WTC11 (cell line): ENCODE measurements at regions of chr2 and their contacts with region 1.

Region 1: DNA sequence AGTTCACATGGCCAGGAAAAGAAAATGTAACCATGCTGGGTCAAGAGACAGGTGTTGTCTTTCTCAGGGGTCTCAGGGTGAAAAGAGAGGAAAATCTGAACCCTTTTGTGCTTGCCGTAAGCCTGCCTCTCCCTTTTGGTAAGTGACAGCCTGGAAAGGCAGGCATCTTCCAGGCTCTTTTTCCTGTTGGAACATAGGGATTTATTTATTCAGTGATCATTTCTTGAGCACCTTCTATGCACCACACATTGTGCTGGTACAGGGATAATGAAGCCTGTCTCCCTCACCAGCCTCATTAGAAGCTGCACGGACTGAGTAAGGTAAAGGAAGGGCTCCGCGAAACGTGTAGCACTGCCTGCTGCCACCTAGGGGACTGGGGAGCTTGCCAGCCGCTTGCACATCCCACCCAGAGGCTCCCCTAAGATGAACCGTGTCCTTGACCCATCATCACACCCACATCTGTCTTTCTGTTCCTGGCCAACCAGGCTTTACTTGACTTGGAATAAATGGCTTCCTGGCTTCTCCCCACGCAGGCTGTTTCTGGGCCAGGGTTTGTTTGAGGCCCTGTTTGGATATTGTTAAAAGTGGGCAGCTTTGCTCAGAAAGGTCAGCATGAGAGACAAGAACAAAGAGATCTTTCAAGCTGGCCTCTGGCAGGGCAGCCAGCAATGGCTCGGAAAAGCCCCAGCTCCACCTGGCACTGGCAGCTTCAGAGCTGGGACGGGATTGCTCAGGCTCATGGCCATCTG is 73.3 kb upstream of the MCFD2 start:
- DNase-seq: peak; percentile 49
- ATAC-seq: peak; percentile 38
- H3K4me3 Mint-ChIP-seq: no peak overlapping the region
- H3K27ac Mint-ChIP-seq: no peak overlapping the region
- H3K4me1 Mint-ChIP-seq: peaks cover 30% of the 10 kb centered on the region
- H3K27me3 Mint-ChIP-seq: no peaks in the 10 kb centered on the region
- CTCF ChIP-seq: no peak

Region 2: DNA sequence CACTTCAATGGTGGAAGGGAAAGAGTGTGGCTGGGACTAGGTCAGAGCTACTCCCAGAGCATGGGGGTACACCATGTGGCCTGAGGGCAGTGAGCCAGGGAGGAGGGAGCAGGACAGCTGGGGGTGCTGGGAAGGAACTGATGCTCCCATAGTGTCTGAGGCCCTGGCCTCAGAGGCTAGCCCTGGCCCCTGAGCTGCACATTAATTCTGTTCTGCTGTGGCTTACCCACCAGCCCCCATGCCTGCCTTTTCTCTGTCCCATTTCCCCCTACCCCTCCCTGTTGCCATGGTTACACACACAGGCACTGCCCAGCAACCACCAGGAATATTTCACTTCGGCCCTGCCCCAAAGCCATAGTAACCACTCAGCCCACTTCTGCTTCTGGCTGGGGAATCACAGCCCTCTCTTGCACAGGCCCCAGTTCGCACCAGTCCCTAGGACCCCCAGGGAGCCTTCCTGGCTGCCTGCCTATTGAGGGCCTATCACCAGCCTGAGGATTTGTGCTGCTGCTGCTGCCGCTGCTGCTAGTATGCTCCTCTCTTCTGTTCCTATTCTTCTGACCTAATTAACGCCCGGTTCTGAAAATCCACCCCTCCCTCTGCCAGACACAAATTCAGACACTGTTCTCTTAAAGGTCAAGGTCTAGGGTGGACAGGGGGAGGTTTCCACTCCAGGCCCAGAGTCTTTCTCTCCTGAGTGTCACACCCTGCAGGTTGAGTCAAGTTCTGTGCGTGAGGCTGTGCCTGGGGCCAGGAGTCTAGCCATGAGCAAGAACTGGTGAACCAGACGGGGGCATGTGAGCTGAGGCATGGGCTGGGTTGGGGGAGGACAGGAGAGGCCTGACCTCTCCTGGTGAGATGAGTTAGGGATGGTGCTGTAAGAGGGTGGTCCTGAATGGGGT is 13.8 kb after region 1 on chr2:
- CTCF ChIA-PET with region 1: interaction called, 16 read pairs
- POLR2A ChIA-PET with region 1: no interaction called
- DNase-seq: no peak
- ATAC-seq: peak; percentile 20
- H3K4me3 Mint-ChIP-seq: no peak overlapping the region
- H3K27ac Mint-ChIP-seq: peak overlapping the region; percentile 32; the same call in 1 of the 2 replicates
- H3K4me1 Mint-ChIP-seq: peaks cover 16% of the 10 kb centered on the region
- H3K27me3 Mint-ChIP-seq: no peaks in the 10 kb centered on the region
- CTCF ChIP-seq: no peak

Region 3: DNA sequence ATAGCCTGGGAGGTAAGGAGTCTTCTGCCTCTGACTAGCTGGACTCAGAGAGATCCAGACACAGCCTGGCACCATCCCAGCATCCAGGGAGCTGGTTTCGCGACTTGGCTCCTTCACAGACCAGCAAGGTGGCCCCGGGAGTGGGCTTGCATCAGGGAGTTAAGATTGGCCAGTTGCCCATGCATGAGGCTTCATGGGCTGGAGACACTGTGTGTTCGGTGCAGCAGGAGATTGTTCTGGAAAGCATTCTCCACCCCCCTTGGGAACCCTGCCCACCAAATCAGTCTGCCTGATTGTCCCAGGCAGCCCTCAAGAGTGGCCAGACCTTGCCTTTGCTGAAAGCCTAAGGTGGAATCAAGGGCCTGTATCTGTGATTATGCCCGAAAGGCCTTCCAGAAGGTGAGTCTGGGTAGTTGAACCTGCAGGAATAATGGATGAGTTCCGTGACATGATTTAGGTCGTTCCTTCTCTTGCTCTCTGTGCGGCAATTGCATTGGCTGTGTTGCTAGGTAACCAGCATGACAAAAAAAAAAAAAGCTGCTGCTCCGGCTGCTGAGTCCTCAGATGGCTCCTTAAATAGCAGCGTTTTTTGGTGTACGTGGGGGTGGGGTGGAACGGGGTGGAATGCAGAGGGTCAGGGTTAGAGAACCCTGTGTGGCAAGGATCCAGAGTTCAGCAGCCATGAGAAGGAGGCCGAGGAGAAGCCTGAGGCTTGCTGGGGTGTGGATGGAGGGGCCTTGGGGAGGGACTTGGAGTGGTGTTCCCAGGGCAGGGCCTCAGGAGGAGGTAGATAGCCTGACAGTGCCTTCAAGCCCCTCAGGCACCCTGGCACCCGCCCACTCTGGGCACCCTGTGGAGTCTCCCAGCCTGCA is 19.7 kb after region 1 on chr2:
- CTCF ChIA-PET with region 1: interaction called, 16 read pairs
- POLR2A ChIA-PET with region 1: no interaction called
- DNase-seq: peak; percentile 32
- ATAC-seq: peak; percentile 69
- H3K4me3 Mint-ChIP-seq: no peak overlapping the region
- H3K27ac Mint-ChIP-seq: no peak overlapping the region
- H3K4me1 Mint-ChIP-seq: peaks cover 11% of the 10 kb centered on the region; the same call in 1 of the 2 replicates
- H3K27me3 Mint-ChIP-seq: no peaks in the 10 kb centered on the region
- CTCF ChIP-seq: no peak